ENCODE measurements at regions of chr19 and their contacts with region 1.

Region 1: DNA sequence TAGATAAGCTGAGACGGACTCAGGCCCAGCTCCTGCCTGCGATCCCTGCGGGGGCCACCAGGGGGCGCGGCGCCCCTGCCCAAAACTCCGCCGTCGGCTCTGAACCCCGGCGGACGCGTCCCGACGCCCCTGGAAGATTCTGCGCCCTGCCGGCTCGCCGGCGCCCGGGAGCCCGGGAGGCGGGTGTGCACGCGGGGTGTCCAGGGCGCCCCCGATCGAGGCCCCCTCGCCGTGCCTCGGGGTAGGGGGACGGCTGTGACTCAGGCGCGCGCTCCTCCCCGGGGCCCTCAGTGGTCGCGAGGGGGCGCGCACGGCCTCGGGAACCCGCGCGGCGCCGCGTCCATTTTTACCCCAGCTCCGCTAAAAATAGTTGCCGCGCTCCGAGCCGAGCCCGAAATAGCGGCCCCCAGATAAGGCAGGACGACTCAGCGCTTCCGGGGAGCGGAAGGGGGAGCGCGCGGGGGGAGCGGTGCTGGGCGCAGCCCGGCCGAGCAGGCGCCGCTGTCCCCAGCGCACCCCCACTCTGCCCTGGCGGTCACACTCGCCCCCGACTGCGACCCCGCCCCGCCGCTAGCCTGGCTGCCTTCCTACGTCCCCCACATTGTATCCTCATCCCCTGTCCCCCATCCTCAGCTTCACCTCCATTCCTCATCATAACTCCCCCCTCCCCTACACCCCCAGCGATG is 16.0 kb upstream of the ERCC1 start:
- DNase-seq: peak; percentile 86
- CTCF ChIP-seq: peak; percentile 89

Region 2: DNA sequence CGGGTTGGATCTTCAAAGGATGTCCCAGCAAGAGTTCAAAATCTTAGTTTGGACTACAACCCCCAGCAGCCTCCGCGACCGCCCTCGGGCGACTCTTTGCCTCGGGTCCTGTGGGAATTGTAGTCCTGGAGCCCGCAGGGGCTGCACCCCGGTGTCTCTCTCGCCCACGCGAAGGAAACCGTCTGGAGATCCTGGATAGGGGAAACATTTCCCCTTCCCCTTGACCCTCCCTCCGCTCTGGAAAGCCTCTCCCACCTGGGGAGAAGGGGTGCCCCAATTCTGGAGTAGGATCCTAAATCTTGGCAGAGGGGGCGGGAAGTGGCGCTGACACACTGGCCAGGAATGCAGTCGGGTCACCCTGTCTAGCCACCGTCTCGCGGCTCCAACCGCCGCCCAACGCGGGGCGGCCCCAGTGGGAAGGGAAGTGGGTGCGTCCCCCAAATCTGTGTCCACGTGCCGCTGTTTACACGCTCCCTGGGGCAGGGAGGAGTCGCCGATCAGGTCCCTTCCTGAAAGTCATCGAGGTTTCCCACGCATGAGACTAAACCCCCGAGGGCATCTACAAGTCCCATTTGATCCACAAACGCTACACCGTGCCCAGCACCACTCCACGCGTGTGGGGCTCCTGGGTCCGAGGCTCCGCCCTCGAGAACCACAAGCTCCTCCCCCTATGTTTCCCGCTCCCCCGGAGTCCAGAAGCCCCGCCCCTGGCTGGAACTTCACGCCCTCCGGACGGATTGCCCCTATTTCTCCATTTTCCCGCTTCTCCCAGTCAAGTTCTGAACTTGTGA is 34.1 kb before region 1 on chr19:
- CTCF ChIA-PET with region 1: interaction called, 12 read pairs
- POLR2A ChIA-PET with region 1: no interaction called
- DNase-seq: peak; percentile 88
- CTCF ChIP-seq: no peak

Region 3: GRCh38 chr19:45423589-45424190 is 16.0 kb before region 1 on chr19 and contains the start of gene ERCC1:
- CTCF ChIA-PET with region 1: interaction called, 36 read pairs
- POLR2A ChIA-PET with region 1: no interaction called
- DNase-seq: peak; percentile 98
- CTCF ChIP-seq: no peak

Region 4: GRCh38 chr19:45455707-45456499 is 16.2 kb after region 1 on chr19:
- CTCF ChIA-PET with region 1: interaction called, 58 read pairs
- POLR2A ChIA-PET with region 1: interaction called, 5 read pairs
- DNase-seq: peak; percentile 81
- CTCF ChIP-seq: no peak

Region 5: DNA sequence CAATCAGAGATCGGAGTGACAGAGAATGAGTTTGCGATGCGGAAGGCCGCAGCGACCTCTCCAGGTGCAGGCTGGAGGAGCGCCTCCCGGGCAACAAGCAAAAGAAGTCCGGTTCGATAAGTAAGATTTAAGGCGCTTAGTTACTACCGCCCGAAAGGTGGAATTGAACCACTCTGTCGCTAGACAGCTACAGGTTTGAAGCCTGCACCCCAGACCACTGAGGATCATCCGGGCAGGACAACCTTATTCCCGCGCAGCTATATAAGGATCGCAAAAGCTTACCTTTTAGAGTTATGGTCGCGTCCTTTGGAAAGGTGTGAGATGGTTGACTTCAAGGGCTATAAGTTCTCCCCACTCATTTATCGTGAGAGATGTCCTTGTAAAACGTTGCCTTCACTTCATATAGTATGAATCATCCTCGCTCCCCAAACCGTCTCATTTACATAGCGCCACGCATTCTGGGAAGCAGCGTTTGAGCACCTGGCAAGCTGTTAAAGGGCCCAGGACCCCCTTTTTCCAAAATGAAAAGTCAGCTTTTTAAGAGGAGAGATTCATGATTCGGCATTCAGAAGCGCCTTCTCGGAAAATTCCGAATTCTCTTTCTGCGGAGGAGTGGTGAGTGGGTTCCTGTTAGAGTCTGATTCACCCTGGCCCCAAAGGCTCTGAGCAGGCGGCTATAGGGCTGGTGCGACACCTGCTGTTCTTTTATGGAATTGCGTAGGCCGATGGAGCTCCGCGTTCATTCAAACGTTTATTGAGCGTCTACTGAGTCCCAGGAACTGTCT is 38.9 kb after region 1 on chr19:
- CTCF ChIA-PET with region 1: interaction called, 339 read pairs
- POLR2A ChIA-PET with region 1: interaction called, 13 read pairs
- DNase-seq: peak; percentile 79
- CTCF ChIP-seq: peak; percentile 91